Stomach (tissue), 19 donors: ENCODE measurements at regions of chr1 and their contacts with region 1.

Region 1: DNA sequence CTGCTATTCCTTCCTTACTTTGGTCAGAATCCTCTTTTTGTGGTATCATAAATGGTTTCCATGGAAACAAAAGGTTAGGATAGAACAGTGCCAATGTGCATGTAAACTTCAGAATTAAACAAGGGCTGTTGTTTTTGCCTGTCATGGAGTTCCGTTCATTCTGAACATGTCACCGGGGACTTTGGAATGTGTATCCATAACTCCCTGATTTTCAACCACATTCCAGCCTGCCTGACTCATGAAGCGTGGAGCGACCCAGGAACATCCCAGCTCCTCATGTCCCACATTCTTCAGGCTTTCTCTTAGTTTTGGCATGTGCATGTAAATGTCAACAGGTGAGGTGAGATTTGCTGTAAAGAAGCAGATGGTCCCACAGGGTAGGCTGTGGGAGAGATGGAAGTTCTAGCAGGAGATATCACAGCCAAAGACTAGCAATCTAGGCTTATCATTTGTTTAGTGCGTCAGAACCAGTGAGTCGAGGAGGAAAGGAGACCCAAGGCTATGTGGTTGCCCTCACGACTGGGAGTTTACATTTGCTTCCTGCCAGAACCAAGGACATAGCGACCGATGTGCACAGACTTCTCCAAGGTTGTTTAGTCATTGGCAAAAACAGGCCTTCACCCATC is 23.0 kb upstream of the DNAJC11 start:
- DNase-seq: no peak
- H3K4me3 ChIP-seq: no peak overlapping the region
- H3K27ac ChIP-seq: no peak overlapping the region
- H3K4me1 ChIP-seq: peaks cover 0 to 11% (median 0%) of the 10 kb centered on the region in 4 donors
- H3K27me3 ChIP-seq: peaks cover 0 to 3% (median 0%) of the 10 kb centered on the region in 3 donors
- CTCF ChIP-seq: no peak
- EP300 ChIP-seq: no peak
- POLR2A ChIP-seq: no peak

Region 2: GRCh38 chr1:7070389-7071029 is 345.9 kb after region 1 on chr1:
- intact Hi-C with region 1: loop called (anchors 5 kb)
- DNase-seq: peak; percentile 56 to 86
- H3K4me3 ChIP-seq: peak overlapping the region; percentile 21 to 37 (median 34)
- H3K27ac ChIP-seq: no peak overlapping the region
- H3K4me1 ChIP-seq: peaks cover 0 to 8% (median 7%) of the 10 kb centered on the region in 4 donors
- H3K27me3 ChIP-seq: peaks cover 0 to 36% (median 0%) of the 10 kb centered on the region in 3 donors
- CTCF ChIP-seq: peak in 5 of 7 experiments; percentile 53 to 83 (median 78)
- EP300 ChIP-seq: no peak
- POLR2A ChIP-seq: no peak